Ovary (tissue), 10 donors: ENCODE measurements at regions of chr17 and their contacts with region 1.

Region 1: GRCh38 chr17:59440784-59441441 is 109.5 kb downstream of the YPEL2 start:
- DNase-seq: peak; percentile 84 to 94 (median 89)
- H3K4me3 ChIP-seq: no peak overlapping the region
- H3K27ac ChIP-seq: no peak overlapping the region
- H3K4me1 ChIP-seq: peaks cover 3% of the 10 kb centered on the region
- H3K27me3 ChIP-seq: no peaks in the 10 kb centered on the region
- CTCF ChIP-seq: peak; percentile 77 to 83 (median 83)
- EP300 ChIP-seq: no peak
- POLR2A ChIP-seq: no peak

Region 2: GRCh38 chr17:58084317-58084981 is 1356.5 kb before region 1 on chr17:
- intact Hi-C with region 1: no loop called
- DNase-seq: peak; percentile 37 to 66 (median 47)
- H3K4me3 ChIP-seq: peak overlapping the region; percentile 99
- H3K27ac ChIP-seq: peak overlapping the region in 1 of 2 donors; percentile 84
- H3K4me1 ChIP-seq: peaks cover 11% of the 10 kb centered on the region
- H3K27me3 ChIP-seq: no peaks in the 10 kb centered on the region
- CTCF ChIP-seq: no peak
- EP300 ChIP-seq: no peak
- POLR2A ChIP-seq: no peak

Region 3: GRCh38 chr17:59388069-59388556 is 52.8 kb before region 1 on chr17:
- intact Hi-C with region 1: no loop called
- DNase-seq: no peak
- H3K4me3 ChIP-seq: no peak overlapping the region
- H3K27ac ChIP-seq: no peak overlapping the region
- H3K4me1 ChIP-seq: peaks cover 10% of the 10 kb centered on the region
- H3K27me3 ChIP-seq: no peaks in the 10 kb centered on the region
- CTCF ChIP-seq: no peak
- EP300 ChIP-seq: no peak
- POLR2A ChIP-seq: no peak

Region 4: DNA sequence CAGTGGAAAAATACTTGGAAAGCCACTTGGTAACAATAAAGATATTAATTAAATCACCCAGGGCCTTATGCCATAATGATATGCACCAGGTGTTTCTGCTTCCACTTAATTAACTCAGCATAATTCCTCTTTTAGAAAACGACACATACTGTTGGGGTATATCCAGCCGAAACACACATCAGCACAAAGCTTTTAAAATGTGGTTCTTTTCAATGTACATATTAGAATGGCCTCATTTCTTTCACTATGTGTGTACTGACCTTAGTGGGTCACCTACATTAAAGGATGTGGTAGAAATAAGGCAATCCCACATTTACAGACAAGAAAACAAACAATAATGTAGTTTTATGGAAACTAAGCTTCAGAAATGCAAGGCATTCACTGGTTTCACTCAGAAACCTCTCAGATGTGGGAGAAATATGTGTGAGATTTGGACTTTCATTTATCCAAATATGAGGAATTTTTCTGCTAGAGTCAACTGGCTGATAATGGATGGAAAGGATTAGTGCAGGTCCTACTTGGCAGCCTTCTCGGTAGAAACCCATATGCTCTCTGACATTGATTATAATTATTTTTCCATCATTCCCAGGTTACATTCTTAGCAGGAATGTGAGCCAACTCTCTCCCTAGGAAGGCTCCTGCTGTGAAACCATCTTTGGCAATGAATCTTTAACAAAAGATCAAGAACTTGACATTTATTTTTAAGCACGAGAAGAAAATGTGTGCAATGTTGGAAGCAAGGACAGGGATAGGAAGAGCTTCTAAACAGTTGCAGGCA is 57.8 kb after region 1 on chr17:
- intact Hi-C with region 1: no loop called
- DNase-seq: no peak
- H3K4me3 ChIP-seq: no peak overlapping the region
- H3K27ac ChIP-seq: no peak overlapping the region
- H3K4me1 ChIP-seq: no peaks in the 10 kb centered on the region
- H3K27me3 ChIP-seq: no peaks in the 10 kb centered on the region
- CTCF ChIP-seq: no peak
- EP300 ChIP-seq: no peak
- POLR2A ChIP-seq: no peak

Region 5: GRCh38 chr17:59565171-59565969 is 124.5 kb after region 1 on chr17 and contains the start of gene DHX40:
- intact Hi-C with region 1: loop called in 1 of 4 experiments (anchors 10 kb)
- DNase-seq: peak; percentile 95 to 97 (median 97)
- H3K4me3 ChIP-seq: peak within 1 kb of the TSS; percentile 93
- H3K27ac ChIP-seq: peak within 1 kb of the TSS; percentile 58 to 71
- H3K4me1 ChIP-seq: peaks cover 2% of the 10 kb centered on the region
- H3K27me3 ChIP-seq: no peaks in the 10 kb centered on the region
- CTCF ChIP-seq: no peak
- EP300 ChIP-seq: peak; percentile 42
- POLR2A ChIP-seq: peak; percentile 76
- total RNA-seq, gene DHX40: 30.1 to 45.6 (median 36.9) TPM